Activated CD8-positive, alpha-beta memory T cell treated with anti-CD3 and anti-CD28 coated beads, Interleukin-2, amount 10 ng/mL, durations not matched to agents 7 days and 5 days (primary cell): ENCODE measurements at regions of chr14 and their contacts with region 1.

Region 1: DNA sequence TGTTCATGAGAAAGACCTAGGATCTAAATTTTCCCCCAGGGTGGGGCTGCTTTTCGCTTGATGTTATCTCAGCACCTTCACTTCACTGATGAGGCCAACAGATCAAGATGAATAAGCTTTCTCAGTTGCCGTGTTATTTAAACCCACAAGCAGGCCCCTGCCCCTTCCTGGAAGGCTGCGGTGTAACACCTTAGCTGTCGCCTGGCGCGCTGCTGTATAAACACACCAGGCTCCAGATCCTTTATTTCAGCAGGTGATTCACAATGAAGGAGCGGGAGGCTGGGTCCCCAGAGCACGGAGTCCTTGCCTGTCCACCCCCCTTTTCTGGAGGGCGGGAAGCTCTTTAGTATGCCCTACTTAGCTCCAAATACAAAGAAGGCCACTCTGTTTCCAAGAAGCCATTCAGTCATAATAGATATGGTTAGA is 515.4 kb downstream of the FUT8 start:
- DNase-seq: peak; percentile 95
- ATAC-seq: peak; percentile 95
- H3K4me3 Mint-ChIP-seq: peak overlapping the region; percentile 27
- H3K27ac Mint-ChIP-seq: peak overlapping the region; percentile 94
- H3K4me1 Mint-ChIP-seq: peaks cover 57% of the 10 kb centered on the region
- H3K27me3 Mint-ChIP-seq: no peaks in the 10 kb centered on the region

Region 2: GRCh38 chr14:65879248-65880009 is 48.5 kb before region 1 on chr14:
- CTCF ChIA-PET with region 1: interaction called, 11 read pairs
- DNase-seq: peak; percentile 48
- ATAC-seq: peak; percentile 80
- H3K4me3 Mint-ChIP-seq: no peak overlapping the region
- H3K27ac Mint-ChIP-seq: peak overlapping the region; percentile 87
- H3K4me1 Mint-ChIP-seq: peaks cover 39% of the 10 kb centered on the region
- H3K27me3 Mint-ChIP-seq: no peaks in the 10 kb centered on the region

Region 3: DNA sequence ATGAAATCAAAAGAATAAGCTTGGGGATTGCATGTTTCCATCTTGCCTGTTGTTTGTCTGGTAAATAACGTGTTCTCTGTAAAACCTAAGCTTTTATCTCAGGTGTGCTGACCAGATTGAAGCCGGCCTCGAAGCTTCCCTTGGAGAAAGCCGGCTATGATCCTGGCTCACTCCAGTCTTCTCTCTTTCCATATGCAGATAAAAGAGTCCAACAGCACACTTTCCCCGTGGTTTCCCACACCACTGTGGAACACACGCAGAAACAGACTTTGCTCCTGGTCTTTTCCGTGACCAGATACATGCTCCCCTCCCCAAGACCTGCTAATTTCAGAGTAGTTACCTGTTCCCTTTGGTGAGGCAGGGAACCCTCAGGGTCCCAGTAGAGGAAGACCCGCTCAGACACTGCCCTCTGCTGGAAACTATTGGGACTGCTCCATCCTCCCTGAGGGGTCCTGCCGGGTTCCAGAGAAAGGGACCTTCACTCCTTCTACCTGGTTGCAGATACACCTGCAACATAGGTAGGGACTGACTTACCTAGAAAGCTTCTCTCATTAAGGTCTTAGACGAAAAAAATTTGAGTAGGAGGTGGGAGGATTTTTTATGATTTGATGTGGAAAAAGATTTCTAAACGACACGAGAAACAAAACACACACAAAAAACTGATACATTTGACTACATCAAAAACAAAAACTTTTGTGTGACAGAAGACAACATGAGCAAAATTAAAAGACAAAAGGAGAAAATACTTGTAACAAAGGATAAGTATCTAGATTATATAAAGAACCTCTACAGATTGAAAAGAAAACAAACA is 142.8 kb after region 1 on chr14:
- CTCF ChIA-PET with region 1: no interaction called
- DNase-seq: peak; percentile 73
- ATAC-seq: peak; percentile 73
- H3K4me3 Mint-ChIP-seq: no peak overlapping the region
- H3K27ac Mint-ChIP-seq: no peak overlapping the region
- H3K4me1 Mint-ChIP-seq: peaks cover 1% of the 10 kb centered on the region
- H3K27me3 Mint-ChIP-seq: peaks cover 13% of the 10 kb centered on the region